Breast epithelium (tissue), 4 donors: ENCODE measurements at regions of chr19 and their contacts with region 1.

Region 1: DNA sequence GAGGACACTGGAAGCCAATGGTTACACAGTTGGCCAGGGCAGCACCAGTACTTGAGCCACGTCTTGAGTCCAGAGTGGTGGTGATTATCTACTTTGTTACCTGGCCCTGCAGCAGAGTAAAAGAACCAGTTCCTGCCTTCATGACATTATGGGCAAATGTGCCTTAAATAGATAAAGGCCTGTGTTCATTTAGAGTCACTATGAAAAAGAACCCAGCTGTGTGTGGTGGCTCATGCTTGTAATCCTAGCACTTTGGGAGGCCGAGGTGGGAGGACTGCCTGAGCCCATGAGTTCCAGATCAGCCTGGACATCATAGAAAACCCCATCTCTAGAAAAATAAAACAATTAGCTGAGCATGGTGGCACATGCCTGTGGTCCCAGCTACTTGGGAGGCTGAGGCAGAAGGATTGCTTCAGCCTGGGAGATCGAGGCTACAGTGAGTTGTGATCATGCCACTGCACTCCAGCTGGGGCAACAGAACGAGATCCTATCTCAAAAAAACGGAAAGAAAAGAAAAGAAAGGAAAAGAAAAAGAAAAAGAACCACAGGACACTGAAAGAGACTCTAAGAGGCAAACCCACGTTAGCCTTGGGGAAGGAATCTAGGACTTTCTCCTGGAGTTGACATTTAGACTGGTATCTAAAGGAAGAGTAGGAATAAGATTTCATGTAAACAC is 3.4 kb upstream of the IRF2BP1 start:
- DNase-seq: no peak
- H3K4me3 ChIP-seq: no peak overlapping the region
- H3K27ac ChIP-seq: no peak overlapping the region
- H3K4me1 ChIP-seq: peaks cover 7 to 8% of the 10 kb centered on the region in 2 donors
- H3K27me3 ChIP-seq: peaks cover 0 to 2% of the 10 kb centered on the region in 2 donors
- CTCF ChIP-seq: no peak
- POLR2A ChIP-seq: no peak

Region 2: DNA sequence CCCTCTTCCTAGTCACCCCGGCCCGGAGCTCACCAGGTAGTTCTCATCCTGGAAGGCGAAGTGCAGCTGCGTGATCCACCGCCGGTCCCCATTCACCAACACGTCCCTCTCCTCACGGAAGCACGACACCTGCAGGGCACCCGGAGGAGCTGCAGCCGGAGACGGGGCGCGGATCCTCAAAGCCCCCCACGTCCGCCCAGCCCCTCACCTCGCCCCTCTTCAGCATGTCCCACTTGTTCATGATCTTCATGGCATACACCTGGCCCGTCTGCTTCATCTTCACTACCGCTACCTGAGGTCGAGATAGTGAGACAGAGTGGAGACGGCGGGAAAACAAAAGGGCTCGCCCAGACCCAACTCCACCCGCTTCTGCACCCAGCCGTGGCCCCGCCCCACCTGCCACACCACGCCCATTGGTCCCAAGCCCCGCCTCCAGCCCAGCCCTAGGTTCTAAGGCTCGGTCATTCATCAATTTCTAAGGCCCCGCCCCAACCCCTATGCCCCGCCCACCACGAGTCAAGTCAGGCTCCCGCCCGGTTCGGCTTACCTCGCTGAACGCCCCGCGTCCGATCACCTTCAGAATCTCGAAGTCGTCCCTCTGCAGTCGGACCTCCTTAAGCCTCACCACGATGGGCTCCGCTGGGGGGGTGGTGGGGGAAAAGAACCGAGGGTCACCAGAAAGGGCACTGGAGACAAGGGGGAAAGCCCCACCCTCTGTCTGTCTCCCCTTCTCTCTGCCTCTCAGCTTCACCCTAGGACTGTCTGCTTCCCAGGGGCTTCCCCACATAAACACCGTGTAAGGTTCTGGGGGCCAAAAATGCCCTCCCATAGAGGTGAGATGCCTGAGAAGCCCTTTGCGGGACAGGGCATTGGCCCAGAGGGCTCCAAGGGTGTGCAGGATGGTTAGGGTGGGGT is 109.9 kb before region 1 on chr19:
- intact Hi-C with region 1: no loop called
- DNase-seq: peak; percentile 91 to 92
- H3K4me3 ChIP-seq: peak overlapping the region; percentile 7 to 57 (median 40)
- H3K27ac ChIP-seq: peak overlapping the region; percentile 61 to 92
- H3K4me1 ChIP-seq: peaks cover 22 to 25% of the 10 kb centered on the region in 2 donors
- H3K27me3 ChIP-seq: no peaks in the 10 kb centered on the region
- CTCF ChIP-seq: peak; percentile 38 to 85 (median 59)
- POLR2A ChIP-seq: no peak

Region 3: GRCh38 chr19:45927565-45928261 is 38.4 kb after region 1 on chr19:
- intact Hi-C with region 1: no loop called
- DNase-seq: peak; percentile 86 to 87
- H3K4me3 ChIP-seq: peak overlapping the region in 1 of 3 donors; percentile 8
- H3K27ac ChIP-seq: no peak overlapping the region
- H3K4me1 ChIP-seq: no peaks in the 10 kb centered on the region
- H3K27me3 ChIP-seq: peaks cover 0 to 7% of the 10 kb centered on the region in 2 donors
- CTCF ChIP-seq: no peak
- POLR2A ChIP-seq: no peak

Region 4: GRCh38 chr19:46009530-46010510 is 120.5 kb after region 1 on chr19:
- intact Hi-C with region 1: loop called (anchors 2 kb)
- DNase-seq: no peak
- H3K4me3 ChIP-seq: no peak overlapping the region
- H3K27ac ChIP-seq: no peak overlapping the region
- H3K4me1 ChIP-seq: peaks cover 0 to under 1% of the 10 kb centered on the region in 2 donors
- H3K27me3 ChIP-seq: no peaks in the 10 kb centered on the region
- CTCF ChIP-seq: peak; percentile 68 to 84 (median 81)
- POLR2A ChIP-seq: no peak